Posterior vena cava (tissue), 2 donors: ENCODE measurements at regions of chr9 and their contacts with region 1.

Region 1: GRCh38 chr9:98848450-98849149 is 41.1 kb downstream of the GALNT12 start:
- DNase-seq: peak; percentile 97

Region 2: DNA sequence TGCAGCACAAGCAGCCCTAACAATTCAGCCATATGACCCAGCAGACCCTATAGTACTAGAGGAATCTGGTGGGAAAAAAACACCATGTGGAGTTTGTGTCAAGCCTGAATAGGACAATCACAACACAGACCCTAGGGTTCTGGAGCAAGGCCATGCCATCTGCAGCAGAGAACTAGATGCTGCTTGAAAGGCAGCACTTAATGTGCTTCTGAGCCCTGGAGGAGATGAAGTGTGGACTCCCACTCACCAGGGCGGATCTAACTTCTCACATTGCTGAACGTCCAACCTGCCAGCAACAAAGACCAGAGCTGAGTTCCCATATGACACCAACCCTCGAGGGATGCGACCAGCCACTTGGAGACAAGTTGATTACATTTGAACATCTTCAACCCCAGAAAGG is 183.1 kb before region 1 on chr9:
- intact Hi-C with region 1: no loop called
- DNase-seq: no peak

Region 3: DNA sequence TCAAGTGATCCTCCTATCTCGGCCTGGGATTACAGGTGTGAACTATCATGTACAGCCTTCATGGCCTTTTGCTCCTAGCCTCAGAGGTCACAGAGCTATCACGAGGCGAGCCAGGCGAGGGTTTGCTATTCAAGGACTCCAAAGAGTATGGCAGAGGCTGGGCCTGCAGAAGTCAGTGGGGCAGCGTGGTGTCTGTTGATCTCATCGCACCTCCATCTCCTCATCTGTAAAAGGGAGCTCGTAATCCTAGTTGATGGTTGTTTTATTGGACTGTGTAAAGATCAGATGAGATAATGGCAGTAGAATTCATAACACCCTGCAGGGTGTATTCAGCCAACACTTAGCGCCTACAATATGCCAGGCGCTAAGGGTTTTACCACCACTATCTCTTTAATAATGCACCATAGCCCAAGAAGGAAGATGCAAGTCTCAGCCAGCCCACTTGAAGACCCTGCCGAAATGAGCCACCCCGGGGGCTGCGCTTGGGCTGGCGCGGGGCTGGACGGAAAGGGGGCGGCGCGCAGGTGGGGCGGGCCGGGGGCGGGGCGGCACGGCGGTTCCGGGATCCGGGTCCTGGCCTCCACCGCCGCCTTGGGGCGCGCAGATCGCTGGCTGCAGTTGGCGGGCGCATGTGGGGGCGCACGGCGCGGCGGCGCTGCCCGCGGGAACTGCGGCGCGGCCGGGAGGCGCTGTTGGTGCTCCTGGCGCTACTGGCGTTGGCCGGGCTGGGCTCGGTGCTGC is 41.4 kb before region 1 on chr9 and contains the start of gene GALNT12:
- intact Hi-C with region 1: no loop called
- DNase-seq: no peak
- total RNA-seq, gene GALNT12: 16.1 to 17.6 TPM

Region 4: DNA sequence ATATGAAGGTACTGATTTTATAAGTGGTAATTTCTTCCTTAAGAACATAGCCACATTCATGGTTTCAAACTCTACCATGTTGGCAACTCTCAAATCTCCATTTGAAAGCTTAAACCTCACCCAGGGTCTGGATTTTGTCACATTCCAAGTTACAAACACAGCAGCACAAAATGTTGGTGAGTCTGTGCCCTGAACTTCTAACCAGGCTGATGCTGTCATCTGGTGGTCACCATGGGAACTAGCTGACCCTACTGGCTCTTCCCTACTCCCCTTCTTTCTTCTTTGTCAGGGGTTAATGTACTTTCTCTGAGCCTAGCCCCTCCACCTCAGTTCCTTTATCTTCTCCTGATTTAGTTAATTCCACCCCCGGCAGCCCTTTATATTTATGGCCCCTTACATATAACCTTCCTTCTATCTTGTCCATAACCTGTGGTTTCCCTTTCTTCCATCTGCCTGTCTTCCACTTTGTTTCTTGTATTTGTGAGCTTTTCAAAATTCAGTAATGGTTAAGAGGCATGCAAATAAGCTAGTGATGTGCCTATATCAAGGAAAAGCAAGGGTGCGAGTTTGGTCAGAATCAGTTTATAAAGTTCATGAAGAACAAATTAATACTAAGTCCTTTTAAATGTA is 292.2 kb after region 1 on chr9:
- intact Hi-C with region 1: loop called (anchors 10 kb)
- DNase-seq: no peak